ENCODE measurements at regions of chr5 and their contacts with region 1.

Region 1: DNA sequence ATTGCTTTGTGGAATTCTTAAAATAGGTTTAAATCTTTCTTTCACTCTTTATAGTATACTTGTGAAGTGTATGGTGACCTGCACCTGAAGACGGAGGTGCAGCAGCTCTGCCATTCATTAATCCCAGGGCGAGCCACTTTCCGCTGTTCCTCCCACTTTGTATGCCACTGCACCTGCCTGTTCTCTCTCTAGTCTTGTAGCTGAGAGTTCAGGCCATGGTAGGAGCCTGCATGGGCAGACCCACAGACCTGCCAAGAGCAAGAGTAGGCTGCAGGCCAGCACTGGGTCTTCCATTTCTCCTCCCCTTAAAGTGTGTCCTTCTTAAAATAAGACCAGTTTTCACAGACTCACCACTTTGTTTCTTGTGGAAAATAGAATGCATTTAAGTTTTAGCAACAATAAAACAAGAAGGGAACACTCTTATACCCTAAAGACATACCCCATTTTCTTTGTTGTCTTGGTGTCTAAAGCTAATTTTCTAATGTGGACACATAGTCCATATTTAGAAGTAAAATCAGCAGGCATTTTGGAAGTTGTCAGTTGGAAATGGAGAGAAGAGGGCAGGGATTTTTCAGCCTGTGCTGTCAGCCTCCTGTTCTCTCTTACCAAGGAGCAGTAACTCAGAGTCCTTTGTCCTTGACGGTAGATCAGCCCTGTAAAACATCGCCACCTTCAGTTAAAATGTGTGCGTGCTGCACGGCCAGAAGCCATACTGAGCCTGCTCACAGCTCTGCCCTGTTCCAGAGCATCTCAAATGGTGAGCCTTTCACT is 103.2 kb downstream of the SNCAIP start:
- DNase-seq: peak; percentile 77 to 81
- H3K4me3 ChIP-seq: no peak overlapping the region
- H3K4me1 ChIP-seq: peaks cover 8% of the 10 kb centered on the region
- H3K27me3 ChIP-seq: no peaks in the 10 kb centered on the region

Region 2: GRCh38 chr5:122322801-122323548 is 92.2 kb before region 1 on chr5:
- in situ Hi-C with region 1: loop called (anchors 10 kb)
- DNase-seq: no peak
- H3K4me3 ChIP-seq: no peak overlapping the region
- H3K4me1 ChIP-seq: peaks cover 3% of the 10 kb centered on the region
- H3K27me3 ChIP-seq: 0 out of 2 replicates have a peak, but pooled peaks cover 3% of the 10 kb centered on the region

Measured in HAP-1 (cell line).